ENCODE measurements at regions of chr4 and their contacts with region 1.

Region 1: GRCh38 chr4:182246401-182247205 is 3.4 kb downstream of the TENM3 start:
- DNase-seq: peak; percentile 51
- H3K4me3 ChIP-seq: no peak overlapping the region
- H3K27ac ChIP-seq: no peak overlapping the region
- H3K4me1 ChIP-seq: no peaks in the 10 kb centered on the region
- H3K27me3 ChIP-seq: no peaks in the 10 kb centered on the region
- CTCF ChIP-seq: no peak
- POLR2A ChIP-seq: no peak

Region 2: GRCh38 chr4:182207830-182208396 is 38.7 kb before region 1 on chr4:
- intact Hi-C with region 1: loop called (anchors 5 kb)
- DNase-seq: no peak
- H3K4me3 ChIP-seq: no peak overlapping the region
- H3K27ac ChIP-seq: peak overlapping the region in 1 of 2 donors; percentile 2
- H3K4me1 ChIP-seq: no peaks in the 10 kb centered on the region
- H3K27me3 ChIP-seq: no peaks in the 10 kb centered on the region
- CTCF ChIP-seq: no peak
- POLR2A ChIP-seq: no peak

Region 3: GRCh38 chr4:182448281-182449151 is 201.9 kb after region 1 on chr4:
- intact Hi-C with region 1: loop called (anchors 5 kb)
- DNase-seq: peak; percentile 91
- H3K4me3 ChIP-seq: peak overlapping the region; percentile 64 to 69
- H3K27ac ChIP-seq: peak overlapping the region; percentile 76
- H3K4me1 ChIP-seq: peaks cover 3% of the 10 kb centered on the region
- H3K27me3 ChIP-seq: no peaks in the 10 kb centered on the region
- CTCF ChIP-seq: no peak
- POLR2A ChIP-seq: no peak